ENCODE measurements at regions of chr2 and their contacts with region 1.

Region 1: DNA sequence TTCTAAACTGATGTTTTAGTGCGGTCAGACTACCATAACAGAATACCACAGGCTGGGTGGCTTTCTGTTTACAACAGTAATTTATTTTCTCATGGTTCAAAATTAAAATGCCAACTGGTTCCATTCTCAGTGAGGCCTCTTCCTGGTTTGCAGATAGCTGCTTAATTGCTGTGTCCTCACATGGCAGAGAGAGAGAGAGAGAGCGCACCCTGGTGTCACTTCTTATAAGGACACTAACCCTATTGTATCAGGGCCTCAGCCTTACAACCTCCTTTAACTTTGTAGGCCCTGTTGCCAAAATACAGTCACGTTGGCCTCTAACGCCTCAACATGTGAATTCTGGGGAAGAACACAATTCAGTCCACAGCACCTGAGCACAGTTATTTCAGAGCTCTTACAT is 37.5 kb upstream of the ZNF385B start:
- DNase-seq: peak; percentile 38 to 44
- H3K4me3 ChIP-seq: no peak overlapping the region
- H3K4me3 Mint-ChIP-seq: no peak overlapping the region
- H3K27ac Mint-ChIP-seq: no peak overlapping the region
- H3K4me1 ChIP-seq: no peaks in the 10 kb centered on the region
- H3K4me1 Mint-ChIP-seq: no peaks in the 10 kb centered on the region
- H3K27me3 ChIP-seq: no peaks in the 10 kb centered on the region
- H3K27me3 Mint-ChIP-seq: peaks cover 4% of the 10 kb centered on the region
- CTCF ChIP-seq: peak; percentile 13 to 53

Region 2: DNA sequence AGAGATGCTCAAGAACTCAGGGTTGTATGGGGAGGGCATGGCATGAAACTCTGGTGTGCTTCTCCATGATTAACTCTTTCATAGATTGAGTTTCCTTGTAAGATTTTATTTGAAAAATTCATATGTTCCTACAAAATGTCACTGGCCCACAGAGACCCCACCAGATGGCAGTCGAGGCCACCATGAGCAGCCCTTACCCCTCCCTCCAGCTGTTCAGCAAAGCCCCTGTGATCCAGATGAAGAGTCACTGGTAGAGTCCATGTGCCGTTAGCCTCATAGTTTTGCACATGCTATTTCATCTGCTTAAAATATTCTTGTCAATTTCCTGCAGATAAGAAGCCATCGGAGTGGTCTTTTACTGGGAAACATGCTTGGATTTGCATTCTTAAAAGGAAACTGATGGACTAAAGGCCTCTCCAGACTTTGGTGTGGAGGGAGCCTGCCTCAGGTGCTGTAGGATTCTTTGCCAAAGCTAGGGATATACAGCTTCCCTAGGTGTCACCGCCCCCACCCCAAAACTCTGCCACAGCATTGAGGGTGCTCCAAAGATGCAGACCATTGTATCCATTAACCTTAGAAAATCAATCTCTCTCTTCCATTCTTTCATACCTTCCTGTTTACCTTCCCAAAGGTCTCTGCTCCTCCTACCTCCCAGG is 56.2 kb before region 1 on chr2:
- CTCF ChIA-PET with region 1: interaction called, 4 read pairs
- POLR2A ChIA-PET with region 1: no interaction called
- intact Hi-C with region 1: loop called (anchors 1 kb)
- DNase-seq: peak; percentile 52 to 60
- H3K4me3 ChIP-seq: no peak overlapping the region
- H3K4me3 Mint-ChIP-seq: no peak overlapping the region
- H3K27ac Mint-ChIP-seq: no peak overlapping the region
- H3K4me1 ChIP-seq: no peaks in the 10 kb centered on the region
- H3K4me1 Mint-ChIP-seq: no peaks in the 10 kb centered on the region
- H3K27me3 ChIP-seq: no peaks in the 10 kb centered on the region
- H3K27me3 Mint-ChIP-seq: peaks cover 9% of the 10 kb centered on the region
- CTCF ChIP-seq: peak; percentile 69 to 76

Measured in Caco-2 (cell line).